Dendritic cell treated with granulocyte-macrophage colony-stimulating factor and Interleukin-4, amounts not matched to agents 40 ng/mL and 50 ng/mL, for 4 days (primary cell): ENCODE measurements at regions of chr4 and their contacts with region 1.

Region 1: DNA sequence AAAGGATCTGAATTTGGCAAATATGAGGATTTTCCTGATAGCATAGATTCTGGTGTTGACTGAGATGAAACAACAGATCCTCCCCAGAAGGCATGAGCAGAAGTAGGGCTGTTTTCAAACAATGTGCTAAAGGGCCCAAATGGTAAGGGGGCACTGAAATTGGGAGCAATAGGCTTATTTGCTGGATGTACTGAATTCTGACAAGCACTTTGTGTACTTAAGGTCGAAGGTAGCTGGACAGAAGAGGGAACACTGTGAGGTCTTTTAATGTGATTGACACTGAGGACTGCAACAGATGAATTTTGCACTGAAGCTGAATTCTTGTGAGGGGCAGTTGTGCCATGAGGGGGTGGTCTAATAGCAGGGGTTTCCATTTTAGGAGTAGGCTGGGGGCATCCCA is 21.2 kb upstream of the COX18 start:
- H3K4me3 Mint-ChIP-seq: no peak overlapping the region
- H3K27ac Mint-ChIP-seq: peak overlapping the region; percentile 18
- H3K4me1 Mint-ChIP-seq: peaks cover 15% of the 10 kb centered on the region
- H3K27me3 Mint-ChIP-seq: no peaks in the 10 kb centered on the region

Region 2: GRCh38 chr4:72924814-72925213 is 165.9 kb before region 1 on chr4:
- intact Hi-C with region 1: no loop called
- H3K4me3 Mint-ChIP-seq: no peak overlapping the region
- H3K27ac Mint-ChIP-seq: no peak overlapping the region
- H3K4me1 Mint-ChIP-seq: no peaks in the 10 kb centered on the region
- H3K27me3 Mint-ChIP-seq: no peaks in the 10 kb centered on the region

Region 3: DNA sequence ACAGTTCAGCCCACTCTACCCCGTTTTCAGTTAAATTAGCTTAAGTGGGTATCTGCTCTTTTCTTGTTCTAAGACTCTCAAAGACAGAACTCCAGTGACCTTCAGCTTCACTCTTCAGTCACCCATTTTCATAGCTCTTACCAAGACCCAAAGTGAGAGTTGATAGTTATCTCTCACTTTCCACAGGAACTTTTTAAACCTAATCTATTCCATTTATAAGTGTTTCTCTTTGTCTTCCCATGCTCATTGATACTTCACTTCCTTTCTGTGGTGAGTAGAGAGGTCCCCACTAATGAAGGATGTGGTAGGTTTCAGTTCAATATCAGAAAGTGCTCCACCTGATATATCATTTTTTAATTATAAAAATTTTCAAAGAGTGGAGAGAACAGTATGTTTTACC is 54.6 kb before region 1 on chr4:
- intact Hi-C with region 1: no loop called
- H3K4me3 Mint-ChIP-seq: no peak overlapping the region
- H3K27ac Mint-ChIP-seq: no peak overlapping the region
- H3K4me1 Mint-ChIP-seq: no peaks in the 10 kb centered on the region
- H3K27me3 Mint-ChIP-seq: peaks cover 1% of the 10 kb centered on the region

Region 4: DNA sequence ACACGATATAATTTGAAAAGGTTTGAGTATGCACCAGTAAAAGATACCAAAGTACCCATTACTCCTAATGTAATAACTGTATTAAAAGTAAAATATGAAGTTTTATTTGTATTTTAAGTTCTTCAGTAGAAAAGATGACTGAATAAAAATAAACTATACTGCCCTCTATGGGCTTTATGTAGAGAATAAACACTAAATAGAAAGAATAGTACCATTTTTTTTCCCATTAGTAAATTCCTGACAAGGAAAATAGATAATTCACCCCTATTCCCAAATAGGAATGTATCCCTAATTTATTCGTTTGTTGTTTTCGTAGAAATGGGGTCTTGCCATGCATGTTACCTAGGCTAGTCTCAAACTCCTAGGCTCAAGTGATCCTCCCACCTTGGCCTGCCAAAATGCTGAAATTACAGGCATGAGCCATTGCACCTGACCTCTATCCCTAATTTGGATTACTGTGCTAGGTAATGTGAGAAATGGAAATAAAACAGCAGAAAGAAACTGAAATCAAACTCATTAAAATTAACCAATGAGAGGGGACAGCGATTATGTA is 52.3 kb after region 1 on chr4:
- intact Hi-C with region 1: loop called (anchors 5 kb)
- H3K4me3 Mint-ChIP-seq: no peak overlapping the region
- H3K27ac Mint-ChIP-seq: no peak overlapping the region
- H3K4me1 Mint-ChIP-seq: no peaks in the 10 kb centered on the region
- H3K27me3 Mint-ChIP-seq: no peaks in the 10 kb centered on the region

Region 5: GRCh38 chr4:73161527-73162185 is 70.9 kb after region 1 on chr4:
- intact Hi-C with region 1: no loop called
- H3K4me3 Mint-ChIP-seq: no peak overlapping the region
- H3K27ac Mint-ChIP-seq: no peak overlapping the region
- H3K4me1 Mint-ChIP-seq: no peaks in the 10 kb centered on the region
- H3K27me3 Mint-ChIP-seq: no peaks in the 10 kb centered on the region